Esophagus muscularis mucosa (tissue), 4 donors: ENCODE measurements at regions of chr20 and their contacts with region 1.

Region 1: DNA sequence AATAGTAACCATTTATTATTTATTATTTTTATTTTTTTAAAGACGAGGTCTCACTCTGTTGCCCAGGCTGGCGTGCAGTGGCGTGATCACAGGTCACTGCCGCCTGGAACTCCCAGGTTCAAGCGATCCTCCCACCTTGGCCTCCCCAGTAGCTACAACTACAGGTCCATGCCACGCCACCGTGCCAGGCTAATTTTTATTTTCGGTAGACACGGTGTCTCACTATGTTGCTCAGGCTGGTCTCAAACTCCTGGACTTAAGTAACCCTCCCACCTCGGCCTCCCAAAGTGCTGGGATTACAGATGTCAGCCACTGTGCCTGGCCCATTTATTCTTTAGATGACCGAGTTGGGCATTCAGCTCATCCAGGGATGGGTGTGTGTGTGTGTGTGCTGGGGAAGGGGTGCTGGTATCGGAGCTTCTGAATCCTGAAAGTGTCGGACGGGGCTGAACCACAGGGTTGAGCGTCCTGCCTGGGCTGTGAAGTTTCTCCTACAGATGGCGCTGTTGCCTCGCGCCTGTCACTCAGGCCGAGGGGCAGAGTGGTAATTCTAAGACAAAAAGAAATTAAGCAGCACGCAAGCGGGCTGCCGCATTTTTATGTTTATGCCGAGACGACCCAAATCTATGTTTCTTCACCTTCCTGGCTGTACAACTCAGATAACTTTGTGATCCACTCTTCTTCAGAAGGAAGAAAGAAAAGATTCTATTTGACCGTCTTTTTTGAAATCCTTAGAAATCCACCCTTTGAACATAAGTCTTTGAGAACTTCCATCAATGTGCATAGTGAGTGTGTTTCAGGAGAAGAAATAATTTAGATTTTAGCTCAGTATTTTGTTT is 252.8 kb downstream of the CDH26 start:
- DNase-seq: peak; percentile 92
- H3K4me3 ChIP-seq: no peak overlapping the region
- H3K27ac ChIP-seq: no peak overlapping the region
- H3K4me1 ChIP-seq: peaks cover 0 to 6% (median 3%) of the 10 kb centered on the region in 4 donors
- H3K27me3 ChIP-seq: peaks cover 0 to 5% (median 0%) of the 10 kb centered on the region in 4 donors
- CTCF ChIP-seq: peak; percentile 71 to 95 (median 86)
- EP300 ChIP-seq: no peak
- POLR2A ChIP-seq: no peak

Region 2: GRCh38 chr20:61120595-61121515 is 909.9 kb after region 1 on chr20:
- intact Hi-C with region 1: loop called (anchors 5 kb)
- DNase-seq: no peak
- H3K4me3 ChIP-seq: no peak overlapping the region
- H3K27ac ChIP-seq: no peak overlapping the region
- H3K4me1 ChIP-seq: peaks cover 6 to 47% (median 26%) of the 10 kb centered on the region in 4 donors
- H3K27me3 ChIP-seq: no peaks in the 10 kb centered on the region
- CTCF ChIP-seq: peak; percentile 62 to 78 (median 62)
- EP300 ChIP-seq: no peak
- POLR2A ChIP-seq: no peak

Region 3: GRCh38 chr20:61220160-61220559 is 1009.2 kb after region 1 on chr20:
- intact Hi-C with region 1: loop called (anchors 5 kb)
- DNase-seq: no peak
- H3K4me3 ChIP-seq: no peak overlapping the region
- H3K27ac ChIP-seq: no peak overlapping the region
- H3K4me1 ChIP-seq: no peaks in the 10 kb centered on the region
- H3K27me3 ChIP-seq: peaks cover 0 to 41% (median 0%) of the 10 kb centered on the region in 4 donors
- CTCF ChIP-seq: no peak
- EP300 ChIP-seq: no peak
- POLR2A ChIP-seq: no peak

Region 4: DNA sequence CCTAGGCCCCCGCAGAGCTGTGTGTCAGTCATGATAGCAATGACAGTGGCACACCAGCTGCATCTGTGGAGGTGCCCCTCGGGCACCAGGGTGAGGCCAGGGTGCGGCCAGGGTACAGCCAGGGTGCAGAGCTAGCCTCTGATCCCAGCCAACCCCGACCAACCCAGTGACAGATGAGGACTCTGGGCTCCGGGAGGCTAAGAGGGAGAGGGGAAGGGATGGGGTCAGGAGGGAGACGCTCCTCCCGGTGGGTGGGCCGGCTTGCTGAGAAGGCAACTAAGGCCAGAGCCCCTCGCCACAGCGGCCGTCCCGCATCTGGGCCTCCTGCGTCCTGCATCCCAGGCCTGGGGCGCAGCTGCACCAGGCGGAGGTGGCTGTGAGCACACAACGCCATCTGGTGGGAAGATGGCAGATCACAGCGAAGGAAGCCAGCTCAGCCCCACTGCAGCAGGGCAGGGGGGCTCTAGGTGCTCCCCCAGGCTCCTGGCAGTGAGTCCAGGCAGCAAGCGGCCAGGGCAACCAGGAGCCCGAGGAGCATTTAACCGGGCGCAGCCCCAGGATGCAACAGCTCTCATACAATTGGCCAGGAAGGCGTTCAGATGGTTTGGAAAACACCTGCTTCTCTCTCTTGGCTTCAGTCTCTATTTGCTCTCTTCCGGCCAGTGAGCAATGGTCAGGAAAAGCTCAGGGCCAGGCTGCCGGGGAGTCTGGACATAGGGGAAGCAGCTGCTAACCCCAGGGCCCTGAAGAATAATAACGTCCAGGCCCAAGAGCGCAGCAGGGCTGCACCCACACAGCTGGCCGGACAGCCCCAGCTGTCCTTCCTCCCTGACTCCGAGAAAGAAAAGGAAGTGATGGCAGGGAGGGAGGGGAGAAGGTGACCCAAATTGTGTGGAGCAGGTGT is 1685.3 kb after region 1 on chr20:
- intact Hi-C with region 1: loop called (anchors 10 kb)
- DNase-seq: no peak
- H3K4me3 ChIP-seq: no peak overlapping the region
- H3K27ac ChIP-seq: no peak overlapping the region
- H3K4me1 ChIP-seq: peaks cover 0 to 4% (median 0%) of the 10 kb centered on the region in 4 donors
- H3K27me3 ChIP-seq: peaks cover 0 to 47% (median 0%) of the 10 kb centered on the region in 4 donors
- CTCF ChIP-seq: peak; percentile 49 to 74 (median 50)
- EP300 ChIP-seq: no peak
- POLR2A ChIP-seq: no peak